ENCODE measurements at regions of chr3 and their contacts with region 1.

Region 1: GRCh38 chr3:120558771-120559241 is 37.3 kb upstream of the NDUFB4 start:
- DNase-seq: peak; percentile 94
- ATAC-seq: peak; percentile 68

Region 2: GRCh38 chr3:120239644-120240043 is 319.2 kb before region 1 on chr3:
- intact Hi-C with region 1: loop called (anchors 5 kb)
- DNase-seq: no peak
- ATAC-seq: no peak

Region 3: DNA sequence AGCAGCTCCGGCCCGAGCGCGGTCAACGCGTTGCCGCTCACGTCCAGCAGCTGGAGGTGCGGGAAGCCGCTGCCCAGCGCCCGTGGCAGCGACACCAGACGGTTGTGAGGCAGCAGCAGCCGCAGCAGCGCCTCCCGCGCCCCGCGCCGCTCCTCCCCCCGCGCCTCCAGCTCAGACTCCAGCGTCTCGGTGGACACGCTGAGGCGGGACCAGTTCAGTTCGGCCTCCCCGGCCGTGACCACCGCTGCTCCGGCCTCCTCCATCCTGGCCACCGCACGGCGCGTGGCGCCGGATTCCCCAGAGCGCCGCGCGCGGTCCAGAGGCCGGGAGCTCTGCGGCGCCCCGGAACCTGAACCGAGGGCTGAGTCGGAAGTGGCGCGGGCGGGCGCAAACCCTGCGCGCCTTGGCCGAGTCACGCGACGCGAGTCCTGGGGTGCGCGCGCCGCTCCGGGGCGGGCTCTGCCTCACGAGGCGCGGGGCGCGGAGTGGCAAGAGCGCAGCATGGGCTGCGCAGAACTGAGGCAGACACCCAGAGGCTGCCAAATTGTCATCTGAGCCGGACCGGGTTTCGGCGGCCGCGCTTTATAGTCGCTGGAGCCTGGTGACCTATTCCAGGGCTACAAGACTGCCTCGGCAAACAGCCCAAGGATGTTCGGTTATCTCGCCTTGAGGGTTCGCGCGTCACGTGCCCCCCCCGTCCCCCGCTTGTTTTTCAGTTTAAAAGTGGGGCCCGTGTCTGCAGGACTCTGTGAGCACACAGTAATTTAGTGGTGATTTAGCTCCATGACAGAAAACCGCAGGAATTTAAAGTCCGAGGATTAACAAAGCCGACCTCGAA is 209.6 kb before region 1 on chr3 and contains the start of gene LRRC58:
- intact Hi-C with region 1: loop called (anchors 5 kb)
- DNase-seq: peak; percentile 96
- ATAC-seq: peak; percentile 98
- total RNA-seq, gene LRRC58: 7.9 TPM

Region 4: DNA sequence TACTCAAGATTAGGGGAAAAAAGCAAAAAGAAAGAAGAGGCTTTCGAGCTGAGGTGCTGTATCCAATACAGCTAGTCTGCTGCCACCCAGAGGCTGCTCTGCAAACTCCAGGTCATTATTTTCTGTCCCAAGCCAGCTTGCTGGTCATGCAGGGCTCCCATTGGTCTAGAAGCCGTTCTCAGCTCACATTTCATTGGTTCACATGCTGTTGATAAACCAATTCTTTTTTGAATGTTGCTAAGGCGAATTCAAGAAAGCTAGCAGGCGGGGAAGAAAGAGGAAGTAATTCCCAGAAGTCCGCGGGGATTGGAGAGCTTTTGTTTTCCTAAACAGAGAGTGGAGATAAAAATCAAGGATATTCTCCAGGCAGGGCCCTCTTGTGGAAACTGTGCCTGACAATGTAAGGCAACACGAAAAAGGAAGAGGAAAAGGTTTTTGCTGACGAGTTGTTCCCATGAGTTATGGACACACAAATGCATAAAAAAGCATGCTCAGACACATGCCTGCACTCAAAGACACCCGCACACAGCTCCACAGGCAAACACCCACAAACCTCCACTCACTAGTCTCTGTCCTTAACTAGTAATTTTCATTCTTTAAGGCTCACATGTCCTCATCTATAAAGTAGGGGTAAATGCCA is 141.4 kb before region 1 on chr3:
- intact Hi-C with region 1: loop called (anchors 2 kb)
- DNase-seq: peak; percentile 91
- ATAC-seq: peak; percentile 63

Region 5: DNA sequence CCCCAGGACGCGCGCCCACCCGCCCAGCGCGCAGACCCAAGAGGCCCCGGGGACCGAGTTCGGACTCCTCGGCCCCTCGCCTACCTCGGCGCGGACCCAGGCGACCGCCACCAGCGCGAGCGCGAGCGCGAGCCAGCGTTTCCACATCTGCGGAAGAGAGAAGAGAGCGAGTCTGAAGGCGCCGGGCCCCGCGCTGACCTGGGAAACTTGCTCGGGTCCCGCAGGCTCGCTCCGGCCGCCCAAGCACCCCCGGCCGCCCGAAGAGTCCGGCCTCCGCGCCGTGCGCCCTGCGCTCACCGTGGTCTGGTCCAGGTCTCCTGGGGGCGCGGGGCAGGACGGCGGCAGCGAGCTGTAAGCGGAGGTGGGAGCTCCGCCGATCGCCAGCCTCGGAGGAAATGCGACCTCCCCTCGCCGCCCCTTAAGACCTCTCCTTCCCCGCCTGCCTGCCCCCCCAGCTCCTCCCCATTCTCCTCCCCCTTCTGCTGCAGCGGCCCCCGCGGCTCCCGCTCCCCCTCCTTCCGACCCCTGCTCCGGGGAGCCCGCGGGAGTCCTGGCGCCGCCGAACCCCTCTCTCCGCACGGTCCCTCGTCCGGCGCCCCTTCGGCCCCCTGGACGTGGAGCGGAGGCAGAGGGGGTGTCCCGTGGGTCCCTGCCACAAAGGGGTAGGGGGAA is 108.1 kb before region 1 on chr3 and contains the start of gene FSTL1:
- intact Hi-C with region 1: loop called (anchors 10 kb)
- DNase-seq: peak; percentile 81
- ATAC-seq: peak; percentile 82
- total RNA-seq, gene FSTL1: 209 TPM

Region 6: DNA sequence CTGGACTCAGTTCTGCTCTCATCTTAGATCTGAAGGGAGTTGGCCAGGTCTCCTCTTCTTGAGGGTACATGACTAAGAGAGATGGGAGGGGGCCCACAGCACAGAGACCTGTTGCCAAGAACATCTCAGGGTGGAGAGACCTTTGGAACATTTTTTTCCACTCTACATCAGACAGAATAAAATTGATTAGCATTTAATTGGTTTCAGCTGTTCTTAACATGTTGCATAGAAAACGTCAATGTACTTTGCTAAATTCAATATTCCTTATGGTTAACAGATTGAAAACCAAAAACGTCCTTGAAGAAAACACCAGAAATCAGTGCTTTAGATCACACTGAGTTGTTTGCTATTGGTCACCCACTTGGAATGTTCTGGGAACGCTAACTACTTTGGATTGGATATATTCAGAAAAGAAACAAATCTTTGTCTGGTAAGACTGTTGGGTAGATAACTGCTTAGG is 71.6 kb before region 1 on chr3:
- intact Hi-C with region 1: no loop called
- DNase-seq: no peak
- ATAC-seq: peak; percentile 67

Region 7: GRCh38 chr3:120795017-120795648 is 236.3 kb after region 1 on chr3:
- intact Hi-C with region 1: loop called (anchors 1 kb)
- DNase-seq: peak; percentile 88
- ATAC-seq: peak; percentile 92